WTC11 (cell line): ENCODE measurements at regions of chr2 and their contacts with region 1.

Region 1: DNA sequence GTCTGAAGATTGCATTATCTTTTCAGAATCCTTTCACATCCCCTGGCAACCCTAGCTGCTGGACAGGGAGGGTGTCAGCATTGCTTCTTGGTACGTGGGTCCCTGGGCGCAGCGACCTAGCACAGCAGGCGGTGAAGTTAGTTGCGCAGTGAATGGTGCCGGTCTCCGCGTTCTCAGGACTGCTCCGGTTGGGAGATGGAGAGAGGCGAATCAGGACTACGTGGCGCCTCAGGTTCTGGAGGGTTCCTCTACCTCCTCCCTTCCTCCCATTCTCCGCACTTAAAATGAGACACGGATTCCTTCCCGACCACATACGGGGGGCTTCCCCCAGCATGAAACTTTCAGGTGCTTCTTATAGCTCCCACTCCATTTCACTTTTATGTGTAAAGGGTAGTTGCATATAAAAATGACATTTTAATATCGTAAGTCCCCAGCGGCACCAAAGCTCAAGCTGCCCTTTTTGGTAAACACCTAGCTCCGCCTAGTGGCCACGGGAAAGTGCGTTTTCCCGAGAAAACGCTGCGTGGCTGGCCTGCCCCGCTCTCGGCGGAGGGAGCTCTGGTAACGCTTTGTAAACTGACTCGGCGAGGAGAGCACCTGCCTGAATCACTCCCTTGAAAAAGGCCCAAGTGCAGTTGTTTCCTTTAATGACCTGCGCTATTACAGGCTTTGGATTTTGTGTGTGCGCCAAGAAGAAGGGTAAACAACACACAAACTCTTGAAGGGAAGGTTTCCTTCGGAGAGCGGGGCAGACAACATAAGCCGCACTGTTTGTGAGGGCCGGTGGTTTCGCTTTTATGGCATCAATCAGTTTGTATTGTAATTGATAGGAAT is 32.9 kb upstream of the INHBB start:
- DNase-seq: peak; percentile 78
- ATAC-seq: peak; percentile 79
- H3K4me3 Mint-ChIP-seq: peak overlapping the region; percentile 74
- H3K27ac Mint-ChIP-seq: no peak overlapping the region
- H3K4me1 Mint-ChIP-seq: peaks cover 12% of the 10 kb centered on the region
- H3K27me3 Mint-ChIP-seq: peaks cover 80% of the 10 kb centered on the region
- CTCF ChIP-seq: peak; percentile 57

Region 2: DNA sequence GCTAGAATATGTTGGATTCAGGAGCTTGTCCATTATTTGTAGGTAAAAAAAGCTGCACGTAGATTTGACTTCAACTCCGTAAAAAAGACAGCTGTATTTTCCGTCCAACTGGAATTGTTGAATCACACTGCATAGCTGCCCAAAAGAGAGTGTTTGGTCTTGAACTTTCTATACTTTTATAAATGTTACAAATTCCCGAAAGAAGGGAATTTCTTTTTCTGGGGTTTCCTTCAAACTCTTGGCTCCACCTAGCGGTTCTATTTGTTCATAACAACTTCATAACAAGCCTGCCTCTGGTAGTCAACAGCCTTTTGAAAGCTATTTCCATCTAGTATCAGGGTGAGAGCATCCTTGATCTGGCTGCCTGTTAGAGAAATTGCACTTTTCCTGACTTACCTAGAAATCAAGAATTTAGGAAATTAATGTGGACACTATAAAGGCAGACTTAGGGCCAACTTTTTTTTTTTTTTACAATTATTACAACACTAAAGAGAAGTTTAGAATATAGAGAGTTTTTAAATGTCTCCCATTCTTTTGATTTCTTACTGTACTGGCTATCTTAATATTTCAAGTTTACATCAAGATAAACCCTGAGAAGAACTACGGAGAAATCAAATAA is 138.0 kb before region 1 on chr2:
- CTCF ChIA-PET with region 1: interaction called, 13 read pairs
- POLR2A ChIA-PET with region 1: no interaction called
- DNase-seq: no peak
- ATAC-seq: peak; percentile 25; the same call in 1 of the 2 replicates
- H3K4me3 Mint-ChIP-seq: no peak overlapping the region
- H3K27ac Mint-ChIP-seq: no peak overlapping the region
- H3K4me1 Mint-ChIP-seq: peaks cover 28% of the 10 kb centered on the region
- H3K27me3 Mint-ChIP-seq: no peaks in the 10 kb centered on the region
- CTCF ChIP-seq: peak; percentile 74

Region 3: DNA sequence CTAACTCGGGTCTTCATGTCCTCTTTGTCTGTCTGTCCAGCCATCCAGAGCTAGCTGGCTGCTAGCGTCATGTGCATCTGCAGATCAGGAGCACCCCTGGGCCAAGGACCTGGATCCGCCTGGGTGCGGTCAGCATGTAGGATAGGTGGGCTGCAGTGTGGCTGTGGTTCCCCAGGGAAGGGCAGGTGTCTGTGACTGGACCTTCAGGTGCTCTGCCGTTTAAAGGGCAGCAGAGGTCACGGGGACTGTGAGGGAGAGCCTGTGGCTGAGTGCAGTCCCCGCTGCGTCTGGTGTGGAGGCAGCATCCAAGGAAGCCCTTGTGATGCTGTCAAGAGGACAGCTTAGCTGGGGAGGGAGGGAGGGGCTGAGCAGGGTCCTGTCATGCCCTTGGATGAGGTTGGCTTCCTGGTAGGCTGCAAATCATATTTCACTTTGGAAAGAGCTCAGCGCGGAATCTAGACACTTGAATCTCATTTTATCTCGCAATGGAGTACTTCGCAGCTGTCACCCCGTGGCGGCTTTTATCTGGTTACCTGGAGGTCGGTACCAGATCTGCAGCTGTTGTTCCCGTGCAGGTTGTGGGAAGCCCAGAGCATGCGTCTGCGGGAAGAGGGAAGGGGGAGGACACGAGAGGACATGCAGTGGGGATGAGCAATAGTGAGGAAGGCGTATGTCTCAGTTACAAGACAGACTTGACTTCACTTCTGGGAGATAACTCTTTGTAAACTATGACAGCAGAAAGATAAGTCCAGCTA is 66.4 kb before region 1 on chr2:
- CTCF ChIA-PET with region 1: interaction called, 34 read pairs
- POLR2A ChIA-PET with region 1: no interaction called
- DNase-seq: no peak
- ATAC-seq: no peak
- H3K4me3 Mint-ChIP-seq: no peak overlapping the region
- H3K27ac Mint-ChIP-seq: no peak overlapping the region
- H3K4me1 Mint-ChIP-seq: peaks cover 36% of the 10 kb centered on the region
- H3K27me3 Mint-ChIP-seq: peaks cover 42% of the 10 kb centered on the region
- CTCF ChIP-seq: no peak

Region 4: DNA sequence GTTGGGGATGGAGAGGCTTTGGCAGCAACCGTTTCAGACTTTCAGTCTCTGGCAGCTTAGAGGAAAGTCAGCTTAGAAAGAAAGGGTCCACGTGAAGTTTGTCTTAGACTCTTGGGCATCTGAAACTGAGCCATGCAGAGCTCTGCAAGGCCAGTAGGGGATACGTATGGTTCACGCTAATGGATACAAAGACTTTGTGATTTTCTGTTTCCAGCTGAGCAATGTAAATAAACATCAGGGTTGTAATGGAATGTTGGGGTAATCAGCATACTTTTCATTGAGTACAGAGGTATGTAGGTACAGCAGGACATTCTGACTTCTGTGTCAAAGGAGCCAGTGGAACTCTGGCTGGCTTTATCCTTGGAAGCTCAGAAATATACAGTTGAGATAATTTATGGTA is 29.4 kb before region 1 on chr2:
- CTCF ChIA-PET with region 1: interaction called, 30 read pairs
- POLR2A ChIA-PET with region 1: no interaction called
- DNase-seq: no peak
- ATAC-seq: peak; percentile 93
- H3K4me3 Mint-ChIP-seq: peak overlapping the region; percentile 2; the same call in 1 of the 2 replicates
- H3K27ac Mint-ChIP-seq: peak overlapping the region; percentile 4; the same call in 1 of the 2 replicates
- H3K4me1 Mint-ChIP-seq: peaks cover 35% of the 10 kb centered on the region
- H3K27me3 Mint-ChIP-seq: no peaks in the 10 kb centered on the region
- CTCF ChIP-seq: no peak

Region 5: DNA sequence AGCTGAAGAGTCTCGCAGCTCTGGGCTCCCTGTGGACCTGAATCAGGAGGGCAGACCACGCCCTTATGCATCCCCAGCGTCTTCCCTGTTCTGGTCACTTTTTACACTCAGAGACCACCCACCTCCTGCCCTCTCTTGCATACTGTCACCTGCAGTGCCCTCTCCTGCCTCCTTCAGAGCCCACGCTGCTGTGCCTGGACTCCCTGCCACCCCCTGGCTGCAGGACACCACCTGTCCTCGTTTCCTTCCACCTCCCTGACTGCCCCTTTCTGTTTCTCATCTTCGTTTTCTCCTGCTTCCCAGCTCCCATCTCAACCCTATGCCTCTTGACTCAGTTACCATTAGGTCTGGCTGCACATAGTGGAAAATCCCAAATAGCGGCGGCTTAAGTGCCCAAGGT is 23.7 kb after region 1 on chr2:
- CTCF ChIA-PET with region 1: interaction called, 23 read pairs
- POLR2A ChIA-PET with region 1: no interaction called
- DNase-seq: no peak
- ATAC-seq: peak; percentile 51
- H3K4me3 Mint-ChIP-seq: no peak overlapping the region
- H3K27ac Mint-ChIP-seq: no peak overlapping the region
- H3K4me1 Mint-ChIP-seq: peaks cover 17% of the 10 kb centered on the region
- H3K27me3 Mint-ChIP-seq: peaks cover 37% of the 10 kb centered on the region
- CTCF ChIP-seq: no peak

Region 6: DNA sequence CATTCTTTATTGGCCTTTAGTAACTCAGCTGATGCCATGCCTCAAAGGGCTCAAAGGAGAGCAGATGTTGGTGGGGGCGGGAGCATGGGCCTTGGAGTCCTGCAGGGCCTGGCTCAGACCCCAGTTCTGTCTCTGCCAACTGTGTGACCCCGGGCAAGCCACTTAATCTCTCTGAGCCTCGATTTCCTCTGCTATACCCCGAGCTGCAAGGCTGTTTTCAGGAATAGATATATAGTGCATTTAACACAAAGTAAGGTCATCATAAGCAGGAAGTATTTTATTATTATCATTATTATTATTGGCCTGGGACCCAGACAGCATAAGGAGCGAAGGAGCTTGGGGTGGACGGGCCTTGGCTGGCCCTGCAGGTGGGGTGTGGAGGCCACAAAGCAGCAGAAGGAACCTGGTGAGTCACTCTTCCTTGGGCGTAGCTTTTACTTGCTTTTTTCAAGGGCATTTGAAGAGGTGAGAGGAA is 195.5 kb after region 1 on chr2:
- CTCF ChIA-PET with region 1: interaction called, 12 read pairs
- POLR2A ChIA-PET with region 1: no interaction called
- DNase-seq: no peak
- ATAC-seq: no peak
- H3K4me3 Mint-ChIP-seq: no peak overlapping the region
- H3K27ac Mint-ChIP-seq: no peak overlapping the region
- H3K4me1 Mint-ChIP-seq: peaks cover 4% of the 10 kb centered on the region; the same call in 1 of the 2 replicates
- H3K27me3 Mint-ChIP-seq: peaks cover 12% of the 10 kb centered on the region
- CTCF ChIP-seq: no peak